Sigmoid colon (tissue), 7 donors: ENCODE measurements at regions of chr6 and their contacts with region 1.

Region 1: GRCh38 chr6:15491255-15491985 is 171.4 kb downstream of the DTNBP1 start:
- DNase-seq: peak; percentile 90
- H3K4me3 ChIP-seq: no peak overlapping the region
- H3K27ac ChIP-seq: peak overlapping the region; percentile 4 to 51 (median 32)
- H3K4me1 ChIP-seq: peaks cover 0 to 28% (median 22%) of the 10 kb centered on the region in 4 donors
- H3K27me3 ChIP-seq: no peaks in the 10 kb centered on the region
- CTCF ChIP-seq: peak; percentile 73 to 94 (median 80)
- EP300 ChIP-seq: no peak
- POLR2A ChIP-seq: no peak

Region 2: GRCh38 chr6:14129575-14129974 is 1361.8 kb before region 1 on chr6:
- intact Hi-C with region 1: loop called (anchors 10 kb)
- DNase-seq: peak; percentile 67
- H3K4me3 ChIP-seq: no peak overlapping the region
- H3K27ac ChIP-seq: no peak overlapping the region
- H3K4me1 ChIP-seq: peaks cover 0 to 19% (median 15%) of the 10 kb centered on the region in 4 donors
- H3K27me3 ChIP-seq: no peaks in the 10 kb centered on the region
- CTCF ChIP-seq: peak in 3 of 4 experiments; percentile 33 to 52 (median 43)
- EP300 ChIP-seq: no peak
- POLR2A ChIP-seq: no peak

Region 3: GRCh38 chr6:14210663-14211561 is 1280.5 kb before region 1 on chr6:
- intact Hi-C with region 1: loop called (anchors 2 kb)
- DNase-seq: peak; percentile 96
- H3K4me3 ChIP-seq: peak overlapping the region; percentile 62 to 72 (median 70)
- H3K27ac ChIP-seq: peak overlapping the region; percentile 76 to 84 (median 82)
- H3K4me1 ChIP-seq: peaks cover 0 to 14% (median 9%) of the 10 kb centered on the region in 4 donors
- H3K27me3 ChIP-seq: no peaks in the 10 kb centered on the region
- CTCF ChIP-seq: peak in 2 of 4 experiments; percentile 45 to 62
- EP300 ChIP-seq: peak in 1 of 4 donors; percentile 7
- POLR2A ChIP-seq: peak in 1 of 2 donors; percentile 42

Region 4: GRCh38 chr6:15441215-15441868 is 50.1 kb before region 1 on chr6:
- intact Hi-C with region 1: no loop called
- DNase-seq: no peak
- H3K4me3 ChIP-seq: no peak overlapping the region
- H3K27ac ChIP-seq: no peak overlapping the region
- H3K4me1 ChIP-seq: peaks cover 0 to 51% (median 36%) of the 10 kb centered on the region in 4 donors
- H3K27me3 ChIP-seq: no peaks in the 10 kb centered on the region
- CTCF ChIP-seq: peak; percentile 30 to 82 (median 66)
- EP300 ChIP-seq: no peak
- POLR2A ChIP-seq: no peak

Region 5: DNA sequence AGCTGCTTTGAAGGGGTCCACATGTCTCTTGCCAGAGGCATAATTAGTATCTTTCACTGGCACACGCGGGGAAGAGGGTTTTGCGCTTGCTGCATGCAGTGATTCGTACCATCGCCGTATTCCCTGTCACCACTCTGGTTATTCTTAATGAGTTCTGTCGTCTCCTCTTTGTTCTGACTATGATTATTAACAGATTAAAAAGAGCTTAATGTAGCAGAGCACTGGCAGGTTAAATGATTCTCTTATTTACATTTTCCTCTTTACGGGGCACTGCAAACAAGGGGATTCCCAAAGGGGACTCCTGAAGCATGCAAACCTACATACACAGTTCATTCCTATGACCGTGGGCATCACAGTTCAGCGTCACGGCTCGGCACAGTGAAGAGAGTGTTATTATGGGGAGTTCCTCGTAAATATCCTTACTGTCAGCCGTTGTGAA is 33.4 kb before region 1 on chr6:
- intact Hi-C with region 1: no loop called
- DNase-seq: no peak
- H3K4me3 ChIP-seq: no peak overlapping the region
- H3K27ac ChIP-seq: no peak overlapping the region
- H3K4me1 ChIP-seq: peaks cover 0 to 51% (median 25%) of the 10 kb centered on the region in 4 donors
- H3K27me3 ChIP-seq: no peaks in the 10 kb centered on the region
- CTCF ChIP-seq: no peak
- EP300 ChIP-seq: no peak
- POLR2A ChIP-seq: no peak

Region 6: DNA sequence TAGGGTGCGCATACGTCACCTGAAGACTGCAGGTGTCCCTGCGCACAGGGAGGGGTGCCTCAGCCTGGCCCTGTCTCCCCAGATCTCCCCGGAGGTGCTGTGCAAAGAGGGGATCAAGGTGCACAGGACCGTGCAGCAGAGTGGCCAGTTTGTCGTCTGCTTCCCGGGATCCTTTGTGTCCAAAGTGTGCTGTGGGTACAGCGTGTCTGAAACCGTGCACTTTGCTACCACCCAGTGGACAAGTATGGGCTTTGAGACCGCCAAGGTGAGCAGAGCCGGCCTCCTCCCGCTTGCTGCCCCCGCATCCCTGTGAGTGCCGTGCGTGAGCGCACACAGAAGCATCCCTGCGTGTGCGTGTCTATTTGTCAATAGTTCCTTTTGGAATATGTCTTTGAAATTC is 20.7 kb after region 1 on chr6:
- intact Hi-C with region 1: no loop called
- DNase-seq: no peak
- H3K4me3 ChIP-seq: no peak overlapping the region
- H3K27ac ChIP-seq: no peak overlapping the region
- H3K4me1 ChIP-seq: no peaks in the 10 kb centered on the region
- H3K27me3 ChIP-seq: no peaks in the 10 kb centered on the region
- CTCF ChIP-seq: no peak
- EP300 ChIP-seq: no peak
- POLR2A ChIP-seq: no peak

Region 7: DNA sequence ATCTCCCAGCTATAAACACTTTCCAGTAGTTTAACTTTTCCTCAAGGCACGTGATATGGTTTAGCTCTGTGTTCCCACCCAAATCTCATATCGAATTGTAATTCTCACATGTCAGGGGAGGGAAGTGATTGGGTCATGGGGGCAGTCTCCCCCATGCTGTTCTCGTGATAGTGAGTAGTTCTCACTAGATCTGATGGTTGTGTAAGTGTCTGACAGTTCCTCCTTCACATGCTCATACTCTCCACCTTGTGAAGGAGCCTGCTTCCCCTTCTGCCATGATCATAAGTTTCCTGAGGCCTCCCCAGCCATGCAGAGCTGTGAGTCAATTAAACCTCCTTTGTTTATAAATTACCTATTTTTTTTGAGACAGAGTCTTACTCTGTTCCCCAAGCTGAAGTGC is 43.5 kb after region 1 on chr6:
- intact Hi-C with region 1: no loop called
- DNase-seq: no peak
- H3K4me3 ChIP-seq: no peak overlapping the region
- H3K27ac ChIP-seq: no peak overlapping the region
- H3K4me1 ChIP-seq: peaks cover 0 to 21% (median 16%) of the 10 kb centered on the region in 4 donors
- H3K27me3 ChIP-seq: no peaks in the 10 kb centered on the region
- CTCF ChIP-seq: no peak
- EP300 ChIP-seq: no peak
- POLR2A ChIP-seq: no peak